Left cardiac atrium (tissue), 4 donors: ENCODE measurements at regions of chr11 and their contacts with region 1.

Region 1: GRCh38 chr11:125429166-125429707 is 66.8 kb downstream of the FEZ1 start:
- DNase-seq: peak; percentile 65
- ATAC-seq: peak in 1 of 2 donors; percentile 13

Region 2: GRCh38 chr11:125091247-125091876 is 337.9 kb before region 1 on chr11:
- intact Hi-C with region 1: loop called in 1 of 2 experiments (anchors 2 kb)
- DNase-seq: no peak
- ATAC-seq: peak; percentile 90 to 91

Region 3: GRCh38 chr11:125743681-125744080 is 314.4 kb after region 1 on chr11:
- intact Hi-C with region 1: no loop called
- DNase-seq: no peak
- ATAC-seq: no peak

Region 4: GRCh38 chr11:126172596-126173038 is 743.4 kb after region 1 on chr11:
- intact Hi-C with region 1: no loop called
- DNase-seq: no peak
- ATAC-seq: peak in 1 of 2 donors; percentile 54